K562 (cell line): ENCODE measurements at regions of chr11 and their contacts with region 1.

Region 1: DNA sequence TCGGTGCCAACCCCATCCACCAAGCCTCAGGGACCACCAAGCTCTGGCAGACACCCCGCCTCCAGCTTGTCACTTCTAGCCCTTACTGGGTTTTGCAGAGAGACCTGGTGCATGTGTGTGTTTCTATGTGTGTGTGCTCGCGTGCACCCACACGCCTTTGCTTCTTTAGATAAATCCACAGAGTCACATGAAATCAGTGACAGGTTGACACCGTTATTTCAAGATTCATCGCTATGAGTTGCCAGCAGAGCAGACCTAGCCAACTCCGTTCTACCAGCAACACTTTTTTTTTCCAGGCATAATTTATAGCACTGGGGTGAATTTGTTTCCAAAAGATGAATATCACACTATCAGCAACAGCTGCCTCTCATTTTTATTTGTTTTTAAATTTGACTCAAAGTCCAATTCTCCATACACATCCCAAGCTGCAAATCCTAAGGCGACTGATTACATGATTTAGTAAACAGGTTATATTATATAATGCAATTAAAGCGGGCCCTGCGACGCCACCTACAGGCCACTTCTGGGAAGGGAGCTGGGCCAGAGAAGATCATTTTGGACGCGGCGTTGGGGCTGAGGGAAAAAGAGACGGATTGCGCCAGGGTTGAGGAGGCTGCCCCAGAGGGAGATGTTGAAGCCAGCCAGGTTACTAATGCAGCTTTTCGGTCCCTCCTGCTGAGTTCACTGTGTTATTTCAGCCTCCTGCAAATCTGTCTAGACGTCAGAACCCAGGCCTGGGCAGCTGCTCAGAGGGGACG is 150.5 kb downstream of the FEZ1 start:
- DNase-seq: peak; percentile 60 to 75 (median 70)
- ATAC-seq: peak; percentile 87
- H3K4me3 ChIP-seq: no peak overlapping the region
- H3K27ac ChIP-seq: no peak overlapping the region
- H3K4me1 ChIP-seq: peaks cover 0 to 2% of the 10 kb centered on the region in 2 experiments; a peak in 1 of 5 replicates
- H3K27me3 ChIP-seq: peaks cover 31 to 86% of the 10 kb centered on the region in 2 experiments
- CTCF ChIP-seq: peak; percentile 75 to 87 (median 77)
- EP300 ChIP-seq: no peak
- POLR2A ChIP-seq: no peak
- RAD21 ChIP-seq: peak; percentile 53 to 62

Region 2: DNA sequence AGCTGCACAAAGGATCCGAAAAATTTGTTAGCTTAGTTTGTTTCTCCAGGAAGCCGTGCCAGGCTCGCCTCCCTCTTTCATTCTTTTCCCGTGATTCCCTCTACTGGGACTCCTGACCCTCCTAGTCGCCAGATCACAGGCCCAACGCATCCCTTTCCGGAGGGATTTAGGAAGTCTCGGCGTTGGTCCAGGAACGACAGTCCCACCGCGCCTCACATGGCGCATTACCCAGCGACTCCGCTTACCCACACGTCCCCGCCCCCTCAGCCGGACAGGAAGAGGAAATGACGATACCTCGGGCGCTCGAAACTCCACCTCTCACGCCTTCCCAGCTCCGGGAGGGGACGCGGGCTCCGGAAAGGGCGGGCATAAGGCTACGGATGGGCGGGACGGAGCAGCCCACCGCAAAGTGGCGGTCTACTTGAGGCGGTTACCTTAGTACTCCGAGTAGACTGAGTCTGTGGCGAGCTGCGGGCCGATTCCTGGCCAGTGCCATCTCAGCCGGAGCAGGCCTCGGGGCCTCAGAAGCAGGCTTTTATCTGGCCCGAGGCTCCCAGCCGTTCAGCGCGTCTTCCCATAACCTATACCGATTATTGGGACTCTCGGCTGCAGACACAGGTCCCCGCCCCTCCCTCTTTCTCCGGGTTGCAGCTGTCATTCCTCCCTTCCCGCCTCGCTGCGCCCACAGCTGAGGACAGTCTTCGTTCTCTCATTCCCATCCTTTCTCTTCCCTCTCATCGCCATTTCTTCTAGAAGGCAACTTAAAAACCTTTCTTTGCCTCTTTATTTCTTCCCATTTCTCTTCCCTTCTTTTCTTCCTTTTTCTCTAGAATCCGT is 391.6 kb before region 1 on chr11 and contains the start of gene CCDC15:
- CTCF ChIA-PET with region 1: no interaction called
- POLR2A ChIA-PET with region 1: no interaction called
- in situ Hi-C with region 1: loop called (anchors 25 kb)
- intact Hi-C with region 1: no loop called
- DNase-seq: peak; percentile 90 to 98 (median 92)
- ATAC-seq: peak; percentile 100
- H3K4me3 ChIP-seq: peak within 1 kb of the TSS; percentile 47
- H3K27ac ChIP-seq: peak within 1 kb of the TSS; percentile 81
- H3K4me1 ChIP-seq: peaks cover 5 to 7% of the 10 kb centered on the region in 2 experiments; a peak in 3 of 5 replicates
- H3K27me3 ChIP-seq: peaks cover 0 to 4% of the 10 kb centered on the region in 2 experiments; a peak in 2 of 5 replicates
- CTCF ChIP-seq: no peak
- EP300 ChIP-seq: peak; percentile 75; the same call in 1 of the 2 replicates
- POLR2A ChIP-seq: peak; percentile 97
- RAD21 ChIP-seq: 0 out of 4 replicates have a peak, but pooled peaks of 1 of the 2 experiments have one; percentile 2
- polyA plus RNA-seq, gene CCDC15: 1.9 to 3.7 TPM

Region 3: DNA sequence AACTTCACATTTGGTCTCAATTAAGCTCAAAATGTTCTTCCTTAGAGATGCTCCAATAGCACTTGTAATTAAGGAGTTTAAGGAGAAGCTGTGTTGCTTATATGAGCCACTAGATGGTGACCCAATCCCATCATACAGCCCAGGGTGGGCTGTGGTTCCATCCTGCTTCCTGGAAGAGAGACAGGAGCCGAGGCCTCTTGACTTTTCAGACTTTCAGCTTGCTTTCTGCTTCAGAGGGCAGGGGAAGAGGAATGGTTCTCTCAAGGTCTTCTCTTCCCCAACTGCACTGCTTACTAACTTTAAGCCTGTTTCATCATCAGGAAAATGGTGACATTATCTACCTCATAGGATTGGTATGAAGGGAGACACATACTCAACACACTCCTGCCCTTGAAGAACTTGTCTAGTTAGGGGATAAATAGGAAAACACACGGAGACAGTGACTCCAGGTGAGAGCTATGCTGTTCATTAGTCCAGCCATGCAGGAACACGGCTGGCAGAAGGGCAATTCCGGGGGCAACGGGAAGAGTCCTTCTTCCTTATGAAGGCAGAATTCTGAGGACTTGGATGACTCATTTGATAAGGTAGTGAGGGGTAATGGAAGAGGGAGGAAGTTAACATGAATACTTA is 254.2 kb before region 1 on chr11:
- CTCF ChIA-PET with region 1: no interaction called
- POLR2A ChIA-PET with region 1: no interaction called
- in situ Hi-C with region 1: no loop called
- intact Hi-C with region 1: loop called (anchors 1 kb)
- DNase-seq: peak; percentile 71 to 75 (median 72)
- ATAC-seq: peak; percentile 95
- H3K4me3 ChIP-seq: no peak overlapping the region
- H3K27ac ChIP-seq: no peak overlapping the region
- H3K4me1 ChIP-seq: peaks cover 0 to 7% of the 10 kb centered on the region in 2 experiments; a peak in 2 of 5 replicates
- H3K27me3 ChIP-seq: no peaks in the 10 kb centered on the region
- CTCF ChIP-seq: peak; percentile 65 to 81 (median 78)
- EP300 ChIP-seq: no peak
- POLR2A ChIP-seq: no peak
- RAD21 ChIP-seq: peak; percentile 71 to 84

Region 4: DNA sequence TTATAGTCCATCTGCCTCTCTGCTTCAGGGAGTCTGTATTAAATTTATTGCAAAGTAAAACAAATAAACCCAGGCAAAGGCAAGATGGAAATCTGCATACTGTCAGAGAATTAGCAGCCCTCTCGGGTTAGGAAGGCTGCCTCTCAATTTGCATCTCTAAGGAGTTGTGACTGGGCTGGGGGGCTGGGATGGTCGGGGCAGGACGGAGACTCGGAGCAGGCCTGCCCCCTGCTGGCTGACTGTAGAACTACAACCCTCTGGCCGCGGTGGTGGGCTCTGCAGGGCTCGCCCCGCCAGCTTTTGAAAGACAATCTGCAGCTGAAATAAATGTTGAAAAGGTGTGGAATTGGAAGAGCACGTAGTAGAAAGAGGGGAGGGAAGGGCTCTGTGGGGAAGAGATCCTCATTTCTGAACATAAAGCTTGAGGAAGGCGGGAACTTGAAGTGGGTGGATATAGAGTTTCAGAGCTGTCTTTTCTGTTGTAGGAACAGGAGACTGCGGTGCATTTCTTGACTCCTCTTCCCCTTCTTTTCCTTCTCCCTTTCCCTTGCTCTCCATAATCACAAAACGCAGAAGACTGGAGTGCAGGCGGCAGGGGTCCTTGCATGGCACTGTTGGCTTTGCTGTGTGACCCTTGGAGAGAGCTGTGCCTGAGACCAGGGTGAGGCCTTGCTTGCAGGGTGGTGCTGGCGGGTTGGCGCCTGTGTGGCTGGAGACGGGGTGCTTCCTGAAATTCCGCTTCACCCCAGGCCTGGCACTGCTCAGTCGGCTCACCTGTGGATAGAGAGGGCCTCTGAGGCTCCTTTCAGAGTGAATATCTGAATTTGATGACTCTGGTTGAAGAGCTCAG is 203.7 kb before region 1 on chr11:
- CTCF ChIA-PET with region 1: interaction called, 3 read pairs
- POLR2A ChIA-PET with region 1: no interaction called
- in situ Hi-C with region 1: no loop called
- intact Hi-C with region 1: loop called (anchors 5 kb)
- DNase-seq: peak; percentile 56 to 87 (median 78)
- ATAC-seq: peak; percentile 97
- H3K4me3 ChIP-seq: no peak overlapping the region
- H3K27ac ChIP-seq: no peak overlapping the region
- H3K4me1 ChIP-seq: peaks cover 0 to 7% of the 10 kb centered on the region in 2 experiments; a peak in 2 of 5 replicates
- H3K27me3 ChIP-seq: peaks cover 43 to 58% of the 10 kb centered on the region in 2 experiments; a peak in 4 of 5 replicates
- CTCF ChIP-seq: peak; percentile 81 to 91 (median 85)
- EP300 ChIP-seq: no peak
- POLR2A ChIP-seq: no peak
- RAD21 ChIP-seq: peak; percentile 81 to 87

Region 5: GRCh38 chr11:125164422-125165110 is 181.0 kb before region 1 on chr11 and contains the start of gene PKNOX2:
- CTCF ChIA-PET with region 1: no interaction called
- POLR2A ChIA-PET with region 1: no interaction called
- in situ Hi-C with region 1: no loop called
- intact Hi-C with region 1: loop called (anchors 10 kb)
- DNase-seq: peak; percentile 48 to 71 (median 67)
- ATAC-seq: peak; percentile 96
- H3K4me3 ChIP-seq: no peak within 1 kb of the TSS
- H3K27ac ChIP-seq: no peak within 1 kb of the TSS
- H3K4me1 ChIP-seq: peaks cover 0 to 11% of the 10 kb centered on the region in 2 experiments; a peak in 2 of 5 replicates
- H3K27me3 ChIP-seq: peaks cover 32 to 42% of the 10 kb centered on the region in 2 experiments; a peak in 4 of 5 replicates
- CTCF ChIP-seq: peak in 2 of 3 experiments; percentile 44 to 70; a peak in 4 of 6 replicates
- EP300 ChIP-seq: no peak
- POLR2A ChIP-seq: no peak
- RAD21 ChIP-seq: no peak
- polyA plus RNA-seq, gene PKNOX2: not detected

Region 6: GRCh38 chr11:125404776-125405435 is 59.3 kb after region 1 on chr11:
- CTCF ChIA-PET with region 1: no interaction called
- POLR2A ChIA-PET with region 1: no interaction called
- in situ Hi-C with region 1: loop called (anchors 5 kb)
- intact Hi-C with region 1: loop called (anchors 10 kb)
- DNase-seq: peak; percentile 72 to 92 (median 85)
- ATAC-seq: peak; percentile 98
- H3K4me3 ChIP-seq: no peak overlapping the region
- H3K27ac ChIP-seq: no peak overlapping the region
- H3K4me1 ChIP-seq: peaks cover 0 to 7% of the 10 kb centered on the region in 2 experiments; a peak in 3 of 5 replicates
- H3K27me3 ChIP-seq: peaks cover 67 to 87% of the 10 kb centered on the region in 2 experiments
- CTCF ChIP-seq: peak; percentile 87 to 90 (median 88)
- EP300 ChIP-seq: no peak
- POLR2A ChIP-seq: no peak
- RAD21 ChIP-seq: peak; percentile 55 to 71

Region 7: GRCh38 chr11:125603207-125603606 is 257.6 kb after region 1 on chr11:
- CTCF ChIA-PET with region 1: no interaction called
- POLR2A ChIA-PET with region 1: no interaction called
- in situ Hi-C with region 1: no loop called
- intact Hi-C with region 1: no loop called
- DNase-seq: no peak
- ATAC-seq: no peak
- H3K4me3 ChIP-seq: no peak overlapping the region
- H3K27ac ChIP-seq: no peak overlapping the region
- H3K4me1 ChIP-seq: no peaks in the 10 kb centered on the region
- H3K27me3 ChIP-seq: no peaks in the 10 kb centered on the region
- CTCF ChIP-seq: no peak
- EP300 ChIP-seq: no peak
- POLR2A ChIP-seq: no peak
- RAD21 ChIP-seq: no peak

Region 8: GRCh38 chr11:125750629-125751028 is 405.0 kb after region 1 on chr11:
- CTCF ChIA-PET with region 1: no interaction called
- POLR2A ChIA-PET with region 1: no interaction called
- in situ Hi-C with region 1: no loop called
- intact Hi-C with region 1: no loop called
- DNase-seq: peak in 1 of 4 experiments; percentile 9
- ATAC-seq: no peak
- H3K4me3 ChIP-seq: no peak overlapping the region
- H3K27ac ChIP-seq: no peak overlapping the region
- H3K4me1 ChIP-seq: no peaks in the 10 kb centered on the region
- H3K27me3 ChIP-seq: peaks cover 4% of the 10 kb centered on the region in 2 experiments; a peak in 4 of 5 replicates
- CTCF ChIP-seq: peak in 2 of 3 experiments; percentile 22; a peak in 2 of 6 replicates
- EP300 ChIP-seq: no peak
- POLR2A ChIP-seq: no peak
- RAD21 ChIP-seq: 0 out of 4 replicates have a peak, but pooled peaks of 1 of the 2 experiments have one; percentile 8